ENCODE measurements at regions of chr10 and their contacts with region 1.

Region 1: GRCh38 chr10:35336084-35336831 is at the start of gene CCNY:
- DNase-seq: peak; percentile 77 to 80
- H3K4me3 ChIP-seq: peak within 1 kb of the TSS; percentile 79 to 97 (median 93)
- H3K27ac ChIP-seq: peak within 1 kb of the TSS; percentile 78 to 89 (median 82)
- H3K4me1 ChIP-seq: peaks cover 50 to 57% of the 10 kb centered on the region in 2 donors
- H3K27me3 ChIP-seq: no peaks in the 10 kb centered on the region
- CTCF ChIP-seq: no peak
- POLR2A ChIP-seq: peak in 1 of 2 donors; percentile 74
- total RNA-seq, gene CCNY: 37.5 to 56.3 (median 43.9) TPM

Region 2: DNA sequence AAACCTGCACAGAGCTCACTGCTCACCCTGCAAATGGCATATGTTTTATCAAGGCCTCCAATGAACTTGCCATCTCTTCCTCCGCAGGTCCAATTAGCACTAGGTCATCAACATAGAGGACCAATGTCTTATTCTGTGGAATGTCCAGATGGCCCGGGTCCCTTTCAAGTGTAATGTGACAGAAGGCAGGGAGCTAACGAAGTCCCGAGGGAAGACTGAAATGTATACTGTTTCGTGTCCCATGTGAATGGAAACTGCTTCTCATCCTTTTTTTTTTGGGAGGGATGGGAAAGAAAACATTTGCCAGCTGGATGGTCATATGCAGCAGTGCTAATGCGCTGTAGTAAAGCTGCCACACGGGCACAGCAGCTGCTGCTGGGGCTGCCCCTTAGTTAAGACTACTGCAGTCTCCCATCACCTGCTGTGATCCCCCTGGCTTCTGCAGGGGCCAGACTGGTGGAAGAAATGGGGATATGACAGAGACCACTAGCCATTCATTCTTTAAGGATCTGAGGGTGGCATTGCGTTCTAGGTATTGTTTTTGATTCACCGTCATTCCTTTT is 61.7 kb before region 1 on chr10:
- intact Hi-C with region 1: no loop called
- DNase-seq: no peak
- H3K4me3 ChIP-seq: no peak overlapping the region
- H3K27ac ChIP-seq: no peak overlapping the region
- H3K4me1 ChIP-seq: peaks cover 4 to 6% of the 10 kb centered on the region in 2 donors
- H3K27me3 ChIP-seq: no peaks in the 10 kb centered on the region
- CTCF ChIP-seq: no peak
- POLR2A ChIP-seq: no peak

Region 3: GRCh38 chr10:35412900-35413491 is 76.7 kb after region 1 on chr10:
- intact Hi-C with region 1: loop called (anchors 10 kb)
- DNase-seq: no peak
- H3K4me3 ChIP-seq: no peak overlapping the region
- H3K27ac ChIP-seq: no peak overlapping the region
- H3K4me1 ChIP-seq: peaks cover 0 to 8% of the 10 kb centered on the region in 2 donors
- H3K27me3 ChIP-seq: no peaks in the 10 kb centered on the region
- CTCF ChIP-seq: no peak
- POLR2A ChIP-seq: no peak

Region 4: DNA sequence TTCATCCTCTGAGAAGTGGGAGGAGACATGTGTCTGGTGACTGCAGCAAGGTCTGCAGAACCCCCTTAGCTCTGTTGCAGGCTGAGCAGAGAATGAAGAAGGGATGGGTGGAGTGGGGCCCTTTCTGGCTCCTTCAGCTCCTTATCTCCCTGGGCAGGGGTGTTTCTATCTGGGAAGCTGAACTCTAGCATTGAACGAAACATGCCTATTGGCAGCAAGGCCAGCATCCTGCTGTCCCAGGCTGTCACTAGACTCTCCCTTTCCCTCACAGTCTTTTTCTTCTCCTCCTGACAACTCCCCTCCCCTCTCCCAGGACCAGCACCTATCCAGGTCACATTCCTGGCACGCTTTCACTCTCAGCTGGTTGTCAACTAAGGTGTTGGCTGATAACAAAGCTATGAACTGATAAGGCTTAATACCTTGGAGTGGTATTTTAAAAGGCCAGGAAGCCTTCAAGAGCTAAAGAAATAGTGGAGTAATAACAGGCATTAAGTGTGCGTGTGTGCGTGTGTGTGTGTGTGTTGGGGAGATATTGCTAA is 434.6 kb after region 1 on chr10:
- intact Hi-C with region 1: no loop called
- DNase-seq: no peak
- H3K4me3 ChIP-seq: no peak overlapping the region
- H3K27ac ChIP-seq: no peak overlapping the region
- H3K4me1 ChIP-seq: no peaks in the 10 kb centered on the region
- H3K27me3 ChIP-seq: no peaks in the 10 kb centered on the region
- CTCF ChIP-seq: no peak
- POLR2A ChIP-seq: no peak

Region 5: GRCh38 chr10:36526033-36526432 is 1189.8 kb after region 1 on chr10:
- intact Hi-C with region 1: no loop called
- DNase-seq: no peak
- H3K4me3 ChIP-seq: no peak overlapping the region
- H3K27ac ChIP-seq: no peak overlapping the region
- H3K4me1 ChIP-seq: no peaks in the 10 kb centered on the region
- H3K27me3 ChIP-seq: no peaks in the 10 kb centered on the region
- CTCF ChIP-seq: no peak
- POLR2A ChIP-seq: no peak